ENCODE measurements at regions of chr1 and their contacts with region 1.

Region 1: GRCh38 chr1:52141513-52142219 is at the start of gene ZFYVE9:
- DNase-seq: peak; percentile 32 to 59
- ATAC-seq: peak; percentile 81 to 84
- H3K4me3 ChIP-seq: peak within 1 kb of the TSS; percentile 65 to 94 (median 84)
- H3K27ac ChIP-seq: peak within 1 kb of the TSS; percentile 81 to 96 (median 93)
- H3K4me1 ChIP-seq: peaks cover 43 to 51% of the 10 kb centered on the region in 2 donors
- H3K27me3 ChIP-seq: no peaks in the 10 kb centered on the region
- CTCF ChIP-seq: peak in 4 of 5 experiments; percentile 88 to 94 (median 90)
- POLR2A ChIP-seq: peak; percentile 27 to 40
- total RNA-seq, gene ZFYVE9: 35.9 to 42.9 (median 41.9) TPM

Region 2: GRCh38 chr1:52056163-52056936 is 85.3 kb before region 1 on chr1 and contains the start of gene BTF3L4:
- in situ Hi-C with region 1: no loop called
- intact Hi-C with region 1: loop called (anchors 5 kb)
- DNase-seq: peak; percentile 96 to 97
- ATAC-seq: peak; percentile 89 to 90
- H3K4me3 ChIP-seq: peak within 1 kb of the TSS; percentile 75 to 87 (median 86)
- H3K27ac ChIP-seq: peak within 1 kb of the TSS; percentile 92 to 98 (median 96)
- H3K4me1 ChIP-seq: peaks cover 38 to 39% of the 10 kb centered on the region in 2 donors
- H3K27me3 ChIP-seq: no peaks in the 10 kb centered on the region
- CTCF ChIP-seq: no peak
- POLR2A ChIP-seq: peak; percentile 85 to 86
- total RNA-seq, gene BTF3L4: 68.4 to 92.9 (median 72.4) TPM

Region 3: GRCh38 chr1:52264530-52265115 is 123.0 kb after region 1 on chr1:
- in situ Hi-C with region 1: no loop called
- intact Hi-C with region 1: loop called (anchors 1 kb)
- DNase-seq: no peak
- ATAC-seq: peak in 1 of 2 donors; percentile 54
- H3K4me3 ChIP-seq: no peak overlapping the region
- H3K27ac ChIP-seq: no peak overlapping the region
- H3K4me1 ChIP-seq: no peaks in the 10 kb centered on the region
- H3K27me3 ChIP-seq: no peaks in the 10 kb centered on the region
- CTCF ChIP-seq: peak in 3 of 5 experiments; percentile 9 to 30 (median 23)
- POLR2A ChIP-seq: no peak

Region 4: DNA sequence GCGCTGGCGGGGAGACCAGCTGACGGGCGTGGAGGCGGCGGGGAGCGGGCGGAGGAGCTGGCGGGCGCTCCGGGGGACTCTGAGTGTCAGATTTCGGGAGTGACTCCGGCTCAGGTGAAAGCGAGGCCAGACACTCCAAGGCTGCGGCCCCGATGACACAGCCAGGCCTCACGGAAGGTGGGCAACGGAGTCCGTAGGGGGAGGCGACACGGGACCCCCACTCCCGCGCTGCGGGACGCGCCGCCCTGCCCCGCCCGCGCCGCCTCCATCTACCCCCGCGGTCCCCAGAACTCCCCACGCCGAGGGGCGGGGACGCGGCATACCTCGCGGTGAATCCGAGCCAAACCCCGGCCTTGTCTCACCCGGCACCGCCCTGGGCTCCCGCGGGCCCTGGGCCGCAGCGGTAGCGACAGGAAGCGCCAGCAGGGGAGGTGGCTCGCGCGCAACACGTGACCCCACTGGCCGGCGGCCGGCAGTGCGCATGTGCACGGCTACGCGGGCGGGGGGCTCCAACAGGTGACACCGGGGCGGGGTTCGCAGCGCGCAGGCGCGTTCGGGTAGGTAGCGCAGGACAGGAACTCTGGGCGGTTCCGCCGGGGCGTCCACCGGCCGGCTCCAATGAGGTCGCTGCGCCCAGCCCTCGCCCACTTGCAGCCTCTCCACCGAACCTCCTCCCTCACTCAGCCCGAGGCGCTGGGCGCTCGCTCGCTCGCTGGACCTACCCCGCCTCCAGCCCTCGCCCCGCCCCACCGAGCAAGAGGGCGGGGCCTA is 224.3 kb after region 1 on chr1 and contains the start of gene CC2D1B:
- in situ Hi-C with region 1: no loop called
- intact Hi-C with region 1: loop called (anchors 5 kb)
- DNase-seq: peak; percentile 96 to 99
- ATAC-seq: peak; percentile 82 to 85
- H3K4me3 ChIP-seq: peak within 1 kb of the TSS; percentile 81 to 91 (median 86)
- H3K27ac ChIP-seq: peak within 1 kb of the TSS; percentile 91 to 99 (median 97)
- H3K4me1 ChIP-seq: peaks cover 10 to 14% of the 10 kb centered on the region in 2 donors
- H3K27me3 ChIP-seq: no peaks in the 10 kb centered on the region
- CTCF ChIP-seq: peak in 3 of 5 experiments; percentile 34 to 71 (median 43)
- POLR2A ChIP-seq: peak; percentile 90 to 94
- total RNA-seq, gene CC2D1B: 34.1 to 62.7 (median 52.2) TPM

Region 5: GRCh38 chr1:52697795-52698674 is 556.4 kb after region 1 on chr1 and contains the start of gene COA7:
- in situ Hi-C with region 1: loop called in 2 of 4 experiments (anchors 25 kb)
- intact Hi-C with region 1: no loop called
- DNase-seq: peak; percentile 73 to 85
- ATAC-seq: peak; percentile 71 to 76
- H3K4me3 ChIP-seq: peak within 1 kb of the TSS; percentile 73 to 96 (median 90)
- H3K27ac ChIP-seq: peak within 1 kb of the TSS; percentile 93 to 96 (median 95)
- H3K4me1 ChIP-seq: peaks cover 24 to 26% of the 10 kb centered on the region in 2 donors
- H3K27me3 ChIP-seq: no peaks in the 10 kb centered on the region
- CTCF ChIP-seq: peak in 1 of 5 experiments; percentile 18
- POLR2A ChIP-seq: peak; percentile 47 to 59
- total RNA-seq, gene COA7: 18.7 to 22.3 (median 20.1) TPM